Activated CD4-positive, alpha-beta T cell treated with anti-CD3 and anti-CD28 coated beads for 36 hours (primary cell): ENCODE measurements at regions of chrX and their contacts with region 1.

Region 1: GRCh38 chrX:150365051-150365989 is 2.2 kb downstream of the MAMLD1 start:
- DNase-seq: peak; percentile 79
- ATAC-seq: peak; percentile 48
- H3K4me3 Mint-ChIP-seq: peak overlapping the region; percentile 74
- H3K27ac Mint-ChIP-seq: no peak overlapping the region
- H3K4me1 Mint-ChIP-seq: peaks cover 22% of the 10 kb centered on the region
- H3K27me3 Mint-ChIP-seq: peaks cover 10% of the 10 kb centered on the region

Region 2: GRCh38 chrX:149631234-149632165 is 733.8 kb before region 1 on chrX and contains the start of gene TMEM185A:
- CTCF ChIA-PET with region 1: no interaction called
- POLR2A ChIA-PET with region 1: no interaction called
- intact Hi-C with region 1: loop called in 1 of 2 experiments (anchors 5 kb)
- DNase-seq: peak; percentile 85
- ATAC-seq: peak; percentile 85
- H3K4me3 Mint-ChIP-seq: peak within 1 kb of the TSS; percentile 85
- H3K27ac Mint-ChIP-seq: peak within 1 kb of the TSS; percentile 88
- H3K4me1 Mint-ChIP-seq: peaks cover 37% of the 10 kb centered on the region
- H3K27me3 Mint-ChIP-seq: peaks cover 4% of the 10 kb centered on the region
- total RNA-seq, gene TMEM185A: 10.2 to 14.4 TPM

Region 3: GRCh38 chrX:150200820-150201287 is 164.5 kb before region 1 on chrX:
- CTCF ChIA-PET with region 1: no interaction called
- POLR2A ChIA-PET with region 1: no interaction called
- intact Hi-C with region 1: loop called in 1 of 2 experiments (anchors 2 kb)
- DNase-seq: peak; percentile 83
- ATAC-seq: peak; percentile 99
- H3K4me3 Mint-ChIP-seq: no peak overlapping the region
- H3K27ac Mint-ChIP-seq: no peak overlapping the region
- H3K4me1 Mint-ChIP-seq: peaks cover 10% of the 10 kb centered on the region
- H3K27me3 Mint-ChIP-seq: no peaks in the 10 kb centered on the region

Region 4: DNA sequence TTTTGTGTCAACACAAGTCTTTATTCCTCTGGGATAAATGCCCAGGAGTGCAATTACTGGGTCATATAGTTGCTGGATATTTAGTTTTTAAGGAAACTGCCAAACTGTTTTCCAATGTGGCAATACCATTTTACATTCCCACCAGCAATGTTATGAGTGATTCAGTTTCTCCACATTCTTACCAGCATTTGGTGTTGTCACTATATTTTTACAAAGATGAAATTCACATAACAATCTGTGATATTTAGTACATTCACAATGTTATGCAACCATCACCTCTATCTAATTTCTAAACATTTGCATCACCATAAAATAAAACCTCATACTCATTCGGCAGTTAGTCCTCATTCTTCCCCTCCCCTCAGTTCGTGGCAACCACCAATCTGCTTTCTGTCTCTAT is 72.8 kb after region 1 on chrX:
- CTCF ChIA-PET with region 1: no interaction called
- POLR2A ChIA-PET with region 1: no interaction called
- intact Hi-C with region 1: no loop called
- DNase-seq: no peak
- ATAC-seq: no peak
- H3K4me3 Mint-ChIP-seq: no peak overlapping the region
- H3K27ac Mint-ChIP-seq: no peak overlapping the region
- H3K4me1 Mint-ChIP-seq: no peaks in the 10 kb centered on the region
- H3K27me3 Mint-ChIP-seq: no peaks in the 10 kb centered on the region

Region 5: GRCh38 chrX:150568320-150569154 is 203.2 kb after region 1 on chrX and contains the start of gene MTM1:
- CTCF ChIA-PET with region 1: interaction called, 3 read pairs
- POLR2A ChIA-PET with region 1: interaction called, 3 read pairs
- intact Hi-C with region 1: loop called (anchors 2 to 5 kb)
- DNase-seq: peak; percentile 95
- ATAC-seq: peak; percentile 92
- H3K4me3 Mint-ChIP-seq: peak within 1 kb of the TSS; percentile 75
- H3K27ac Mint-ChIP-seq: peak within 1 kb of the TSS; percentile 85
- H3K4me1 Mint-ChIP-seq: peaks cover 34% of the 10 kb centered on the region
- H3K27me3 Mint-ChIP-seq: no peaks in the 10 kb centered on the region
- total RNA-seq, gene MTM1: 23.1 to 31.3 TPM

Region 6: DNA sequence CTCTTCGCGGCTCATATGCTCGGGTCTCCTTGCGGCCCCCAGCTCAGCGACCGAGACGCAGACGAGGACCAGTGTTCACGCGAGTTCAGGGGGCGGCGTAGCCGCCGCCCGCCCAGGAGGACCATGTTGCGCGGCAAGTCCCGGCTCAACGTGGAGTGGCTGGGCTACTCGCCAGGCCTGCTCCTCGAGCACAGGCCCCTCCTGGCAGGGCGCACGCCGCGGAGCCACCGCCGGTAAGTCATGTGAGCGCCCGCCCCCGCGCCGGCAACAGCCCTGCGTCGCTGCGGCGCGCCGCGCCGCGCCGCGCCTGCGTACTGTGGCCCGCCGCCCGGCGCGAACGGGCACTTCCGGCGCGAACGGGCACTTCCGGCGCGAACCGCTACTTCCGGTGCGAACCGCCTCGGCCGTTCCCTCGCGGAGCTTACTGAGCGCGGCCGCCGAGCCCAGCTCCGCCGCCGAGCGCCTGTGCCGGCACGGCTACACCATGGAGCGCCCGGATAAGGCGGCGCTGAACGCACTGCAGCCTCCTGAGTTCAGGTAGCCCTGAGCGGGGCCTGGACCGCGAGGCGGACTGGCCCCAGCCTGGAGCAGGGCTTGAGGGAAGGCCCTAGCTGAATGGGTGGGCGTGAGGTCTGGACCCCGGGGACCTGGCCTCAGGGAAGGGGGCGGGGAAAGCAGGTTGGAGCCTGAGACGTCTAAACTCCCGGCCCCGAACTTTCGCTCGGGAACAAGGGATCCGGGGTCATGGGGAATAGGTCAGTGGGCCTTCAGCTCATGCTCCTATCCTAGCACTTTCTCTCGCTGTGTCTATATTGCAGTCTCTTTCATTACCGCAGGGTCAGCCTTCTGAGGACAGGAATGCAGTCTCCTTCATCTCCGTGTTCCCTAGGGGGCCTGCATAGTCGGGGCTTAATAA is 1031.8 kb after region 1 on chrX and contains the start of gene VMA21:
- CTCF ChIA-PET with region 1: no interaction called
- POLR2A ChIA-PET with region 1: no interaction called
- intact Hi-C with region 1: loop called in 1 of 2 experiments (anchors 10 kb)
- DNase-seq: peak; percentile 90
- ATAC-seq: peak; percentile 80
- H3K4me3 Mint-ChIP-seq: peak within 1 kb of the TSS; percentile 84
- H3K27ac Mint-ChIP-seq: peak within 1 kb of the TSS; percentile 94
- H3K4me1 Mint-ChIP-seq: peaks cover 49% of the 10 kb centered on the region
- H3K27me3 Mint-ChIP-seq: no peaks in the 10 kb centered on the region
- total RNA-seq, gene VMA21: 42.1 to 43.0 TPM